ENCODE measurements at regions of chr12 and their contacts with region 1.

Region 1: GRCh38 chr12:39443081-39443928 is at the start of gene KIF21A:
- DNase-seq: peak; percentile 70 to 92 (median 84)
- H3K4me3 ChIP-seq: peak within 1 kb of the TSS; percentile 48 to 92 (median 81)
- H3K27ac ChIP-seq: peak within 1 kb of the TSS; percentile 46 to 99 (median 97)
- H3K27me3 ChIP-seq: no peaks in the 10 kb centered on the region
- CTCF ChIP-seq: peak in 53 of 56 donors; percentile 10 to 70 (median 49)
- total RNA-seq, gene KIF21A: 71.2 to 177 (median 134) TPM

Region 2: GRCh38 chr12:39365364-39366001 is 77.8 kb before region 1 on chr12:
- intact Hi-C with region 1: loop called in 1 of 2 experiments (anchors 5 kb)
- DNase-seq: no peak
- H3K4me3 ChIP-seq: no peak overlapping the region
- H3K27ac ChIP-seq: no peak overlapping the region
- H3K27me3 ChIP-seq: no peaks in the 10 kb centered on the region
- CTCF ChIP-seq: peak in 51 of 56 donors; percentile 25 to 74 (median 51)

Region 3: DNA sequence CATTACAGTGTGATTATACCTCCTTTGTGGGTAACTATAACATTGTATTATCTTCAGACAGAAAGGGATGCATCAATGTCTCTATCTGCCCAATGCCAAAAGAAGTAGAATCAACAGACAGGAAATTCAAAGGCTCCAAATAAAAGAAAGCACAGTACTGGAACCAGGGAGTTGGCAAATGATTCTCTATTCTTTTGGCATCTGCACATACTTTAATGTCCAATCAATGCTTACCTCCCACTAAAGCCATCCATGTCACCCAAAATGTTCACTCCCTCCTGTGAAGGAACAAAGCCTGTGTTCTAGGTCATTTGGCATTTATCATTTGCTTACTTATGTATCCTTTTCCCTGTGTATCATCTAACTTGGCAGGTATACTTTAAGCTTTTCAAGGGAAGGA is 37.0 kb before region 1 on chr12:
- intact Hi-C with region 1: loop called in 1 of 2 experiments (anchors 2 kb)
- DNase-seq: no peak
- H3K4me3 ChIP-seq: peak overlapping the region in 10 of 59 donors; percentile 0 to 24 (median 8)
- H3K27ac ChIP-seq: peak overlapping the region in 52 of 59 donors; percentile 4 to 79 (median 48)
- H3K27me3 ChIP-seq: no peaks in the 10 kb centered on the region
- CTCF ChIP-seq: no peak

Region 4: GRCh38 chr12:39619660-39620433 is 176.5 kb after region 1 on chr12 and contains the start of gene ABCD2:
- intact Hi-C with region 1: loop called (anchors 2 kb)
- DNase-seq: peak in 9 of 10 donors; percentile 54 to 86 (median 79)
- H3K4me3 ChIP-seq: peak within 1 kb of the TSS; percentile 43 to 83 (median 68)
- H3K27ac ChIP-seq: peak within 1 kb of the TSS; percentile 29 to 93 (median 79)
- H3K27me3 ChIP-seq: no peaks in the 10 kb centered on the region
- CTCF ChIP-seq: peak in 44 of 56 donors; percentile 6 to 66 (median 35)
- total RNA-seq, gene ABCD2: 3.5 to 19.6 (median 11.8) TPM

Measured in dorsolateral prefrontal cortex (tissue), 120 donors.